Adrenal gland (tissue), 19 donors: ENCODE measurements at regions of chr15 and their contacts with region 1.

Region 1: GRCh38 chr15:92949604-92950249 is 49.6 kb downstream of the CHD2 start:
- DNase-seq: no peak
- H3K4me3 ChIP-seq: no peak overlapping the region
- H3K27ac ChIP-seq: no peak overlapping the region
- H3K4me1 ChIP-seq: no peaks in the 10 kb centered on the region
- H3K27me3 ChIP-seq: no peaks in the 10 kb centered on the region
- CTCF ChIP-seq: no peak
- POLR2A ChIP-seq: no peak

Region 2: DNA sequence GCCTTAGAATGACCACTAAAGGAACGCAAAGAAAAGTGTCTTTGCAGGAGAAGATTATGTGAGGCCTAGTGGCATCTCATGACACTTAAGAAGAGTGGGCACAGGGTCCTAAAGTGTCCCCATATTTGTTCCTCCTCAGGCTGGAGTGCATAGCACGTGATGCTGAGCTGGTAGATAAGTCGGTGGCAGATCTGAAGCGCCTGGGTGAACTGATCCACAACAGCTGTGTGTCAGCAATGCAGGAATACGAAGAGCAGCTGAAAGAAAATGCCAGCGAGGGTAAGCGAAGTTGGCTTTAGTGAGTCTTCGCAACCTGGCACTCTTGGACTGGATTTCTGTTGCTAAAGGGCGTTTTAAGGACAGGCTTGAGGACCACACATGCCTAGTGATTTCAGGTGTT is 43.0 kb after region 1 on chr15:
- intact Hi-C with region 1: loop called in 1 of 2 experiments (anchors 10 kb)
- DNase-seq: no peak
- H3K4me3 ChIP-seq: no peak overlapping the region
- H3K27ac ChIP-seq: no peak overlapping the region
- H3K4me1 ChIP-seq: peaks cover 0 to 13% of the 10 kb centered on the region in 2 donors
- H3K27me3 ChIP-seq: no peaks in the 10 kb centered on the region
- CTCF ChIP-seq: no peak
- POLR2A ChIP-seq: no peak